Sciatic nerve (tissue), 2 donors: ENCODE measurements at regions of chr3 and their contacts with region 1.

Region 1: GRCh38 chr3:128603811-128604775 is 46.5 kb downstream of the RPN1 start:
- DNase-seq: no peak
- ATAC-seq: no peak

Region 2: DNA sequence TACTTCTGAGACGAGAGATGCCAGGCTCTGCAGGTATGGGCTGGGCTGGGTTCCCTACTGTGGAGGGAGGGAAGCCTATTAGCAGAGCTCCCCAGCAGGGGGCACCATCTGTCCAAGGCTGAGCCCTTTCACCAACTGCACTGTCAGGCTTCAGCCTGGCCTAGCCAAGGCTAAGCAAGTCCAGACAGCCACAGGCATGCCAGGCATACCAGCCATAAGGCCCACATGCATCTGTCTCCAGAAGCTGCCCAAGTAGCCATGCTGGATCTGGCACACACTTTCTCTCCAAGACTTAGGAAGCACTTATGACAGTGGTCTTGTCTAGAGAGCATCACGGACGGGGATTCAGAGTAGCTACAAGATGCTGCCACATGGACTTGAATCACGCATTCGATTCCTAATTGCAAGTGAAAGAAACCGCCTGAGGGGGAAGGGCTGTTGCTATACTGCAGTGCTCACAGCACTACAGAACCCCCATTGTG is 508.8 kb before region 1 on chr3:
- intact Hi-C with region 1: loop called (anchors 10 kb)
- DNase-seq: peak; percentile 89
- ATAC-seq: peak; percentile 95

Region 3: GRCh38 chr3:128629936-128630335 is 25.8 kb after region 1 on chr3:
- intact Hi-C with region 1: no loop called
- DNase-seq: no peak
- ATAC-seq: no peak